ENCODE measurements at regions of chr3 and their contacts with region 1.

Region 1: DNA sequence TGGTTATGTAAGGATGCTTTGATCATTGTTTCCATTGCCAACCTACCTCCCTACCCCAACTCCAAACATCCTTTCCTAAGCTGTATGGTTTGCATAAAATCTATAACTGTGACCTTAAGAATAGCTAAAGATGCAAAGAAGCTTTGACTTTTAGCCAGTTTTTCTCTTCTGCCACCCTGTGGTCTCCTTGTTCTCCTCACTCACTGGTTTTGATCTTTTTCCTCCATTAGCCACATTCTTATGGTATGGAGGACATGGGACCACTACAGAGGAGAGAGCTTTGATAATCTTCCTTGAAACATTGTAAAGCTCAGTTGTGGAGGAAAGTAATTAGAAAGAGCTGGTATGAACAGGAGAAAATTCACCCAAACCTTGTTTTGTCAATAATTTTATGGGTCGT is 115.9 kb downstream of the NEK11 start:
- DNase-seq: no peak
- H3K4me3 ChIP-seq: no peak overlapping the region
- H3K27ac ChIP-seq: no peak overlapping the region
- H3K27me3 ChIP-seq: no peaks in the 10 kb centered on the region
- CTCF ChIP-seq: peak in 42 of 56 donors; percentile 18 to 70 (median 39)

Region 2: GRCh38 chr3:130773366-130773765 is 369.2 kb before region 1 on chr3:
- intact Hi-C with region 1: no loop called
- DNase-seq: peak in 1 of 10 donors; percentile 47
- H3K4me3 ChIP-seq: no peak overlapping the region
- H3K27ac ChIP-seq: peak overlapping the region in 4 of 59 donors; percentile 19 to 44 (median 36)
- H3K27me3 ChIP-seq: no peaks in the 10 kb centered on the region
- CTCF ChIP-seq: no peak

Region 3: DNA sequence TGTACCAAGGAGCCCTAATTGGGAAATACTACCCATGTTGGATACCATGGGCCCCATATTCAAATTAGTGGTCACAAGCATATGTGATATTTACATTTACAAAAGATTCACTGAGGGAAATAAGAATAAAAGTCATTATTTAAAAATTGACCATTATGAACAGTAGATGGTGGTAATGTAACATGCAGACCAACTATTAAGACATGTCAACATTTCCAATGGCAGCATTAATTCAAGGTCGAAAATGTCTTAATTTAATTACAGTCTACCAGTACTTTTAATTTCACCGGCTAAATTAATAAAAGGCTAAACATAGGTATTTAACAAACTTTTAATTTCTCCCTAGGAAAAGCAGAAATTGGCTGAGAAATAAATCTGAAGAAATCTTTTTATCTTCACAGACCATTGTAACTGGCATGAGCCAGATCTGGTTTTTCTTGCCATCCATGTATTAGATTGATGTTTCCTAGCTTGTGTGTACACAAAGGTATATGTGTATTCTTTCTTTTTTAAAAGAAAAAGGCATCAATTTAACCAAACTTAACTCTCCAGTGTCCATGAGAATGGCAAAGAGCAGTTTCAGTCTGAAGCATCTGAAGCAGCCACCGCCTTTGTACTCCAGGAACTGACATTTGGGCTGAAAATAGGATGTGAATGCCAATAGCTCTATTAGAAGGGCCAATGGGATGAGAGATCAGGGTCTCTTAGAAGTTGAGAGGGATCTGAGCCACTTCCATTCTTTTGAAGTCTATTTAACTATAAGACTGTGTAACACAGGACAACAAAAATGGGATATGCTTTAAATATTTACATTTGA is 89.3 kb before region 1 on chr3:
- intact Hi-C with region 1: loop called in 1 of 2 experiments (anchors 2 kb)
- DNase-seq: no peak
- H3K4me3 ChIP-seq: no peak overlapping the region
- H3K27ac ChIP-seq: no peak overlapping the region
- H3K27me3 ChIP-seq: no peaks in the 10 kb centered on the region
- CTCF ChIP-seq: peak in 55 of 56 donors; percentile 17 to 82 (median 56)

Region 4: DNA sequence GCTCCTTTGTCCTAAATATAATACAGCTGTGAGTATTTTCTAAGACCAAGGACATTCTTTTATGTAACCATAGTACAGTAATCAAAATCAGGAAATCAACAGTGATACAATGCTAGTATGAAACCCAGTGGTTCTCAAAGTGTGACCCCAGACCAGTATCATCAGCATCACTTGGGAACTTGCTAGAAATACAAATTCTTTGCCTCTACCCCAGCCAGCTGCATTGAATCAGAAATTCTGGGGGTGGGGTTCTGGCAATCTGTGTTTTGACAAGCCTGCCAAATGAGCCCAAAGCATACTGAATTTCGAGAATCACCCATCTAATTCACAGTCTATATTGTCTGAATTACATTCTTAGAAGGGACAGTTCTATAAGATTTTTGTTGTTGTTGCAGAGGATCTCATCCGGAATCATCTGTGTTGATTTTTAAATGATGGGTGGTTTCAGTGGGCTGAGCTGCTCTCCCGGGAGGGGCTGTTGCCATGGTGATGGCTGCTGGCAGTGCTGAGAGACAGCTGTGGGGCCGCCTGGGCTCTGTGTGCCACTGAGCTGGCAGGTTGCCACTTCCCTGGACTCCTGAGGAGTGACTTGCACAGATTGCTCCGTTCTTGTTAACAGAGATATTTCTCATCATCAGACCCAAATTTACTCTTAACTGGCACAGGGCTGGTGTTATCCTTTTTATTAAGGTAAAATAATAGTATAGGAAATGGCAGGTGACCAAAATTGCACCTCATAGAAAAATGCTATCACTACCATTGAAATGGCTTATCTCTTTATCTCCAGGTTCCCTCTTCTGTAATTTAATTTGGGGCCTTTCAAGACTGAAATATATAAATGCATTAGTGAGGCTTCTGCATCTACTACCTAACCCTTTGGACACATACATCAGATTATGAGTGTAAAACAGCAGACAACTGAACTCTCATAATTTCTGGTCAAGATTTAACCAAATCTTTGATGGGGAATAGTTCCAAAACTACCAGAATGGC is 59.4 kb before region 1 on chr3:
- intact Hi-C with region 1: loop called in 1 of 2 experiments (anchors 10 kb)
- DNase-seq: peak; percentile 88 to 99 (median 97)
- H3K4me3 ChIP-seq: peak overlapping the region in 52 of 59 donors; percentile 1 to 56 (median 30)
- H3K27ac ChIP-seq: peak overlapping the region in 57 of 59 donors; percentile 7 to 90 (median 78)
- H3K27me3 ChIP-seq: no peaks in the 10 kb centered on the region
- CTCF ChIP-seq: peak in 1 of 56 donors; percentile 9